ENCODE measurements at regions of chr2 and their contacts with region 1.

Region 1: GRCh38 chr2:30208452-30208851 is 22.9 kb upstream of the LBH start:
- DNase-seq: peak; percentile 75

Region 2: DNA sequence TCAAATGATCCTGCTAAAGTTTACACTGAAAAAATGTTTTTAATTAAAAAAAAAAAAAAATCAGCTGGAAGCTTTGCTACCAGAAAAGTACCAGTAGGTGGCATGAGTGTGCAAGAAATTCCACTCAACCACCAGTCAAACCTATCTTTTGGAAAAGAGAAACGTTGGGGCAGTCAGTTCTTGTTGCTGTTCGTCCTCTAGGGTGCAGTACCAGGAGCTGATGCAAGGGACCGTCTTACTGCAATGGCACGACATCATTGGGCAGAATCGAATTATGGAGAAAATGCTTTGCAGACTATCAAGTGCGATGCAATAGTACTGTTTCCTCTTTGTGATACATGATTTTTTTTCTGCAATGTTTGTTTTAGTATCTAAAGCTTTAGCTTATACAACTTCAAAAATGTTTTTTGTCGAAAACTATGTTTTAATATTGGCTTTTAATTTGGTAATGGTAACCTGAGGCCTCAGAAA is 43.4 kb before region 1 on chr2:
- CTCF ChIA-PET with region 1: interaction called, 15 read pairs
- POLR2A ChIA-PET with region 1: no interaction called
- DNase-seq: peak; percentile 88

Region 3: GRCh38 chr2:30492185-30492584 is 283.7 kb after region 1 on chr2:
- CTCF ChIA-PET with region 1: interaction called, 11 read pairs
- POLR2A ChIA-PET with region 1: no interaction called
- DNase-seq: no peak